ENCODE measurements at regions of chr16 and their contacts with region 1.

Region 1: GRCh38 chr16:84277237-84277823 is 17.3 kb upstream of the WFDC1 start:
- DNase-seq: peak in 1 of 2 experiments; percentile 90
- H3K4me3 ChIP-seq: no peak overlapping the region
- H3K27ac ChIP-seq: no peak overlapping the region
- H3K4me1 ChIP-seq: peaks cover 3 to 7% (median 5%) of the 10 kb centered on the region in 4 experiments
- H3K27me3 ChIP-seq: no peaks in the 10 kb centered on the region; a peak in 2 of 7 replicates
- CTCF ChIP-seq: peak; percentile 80 to 89 (median 82)
- EP300 ChIP-seq: no peak
- POLR2A ChIP-seq: no peak
- RAD21 ChIP-seq: peak; percentile 90 to 95

Region 2: GRCh38 chr16:84247844-84248243 is 29.5 kb before region 1 on chr16:
- CTCF ChIA-PET with region 1: interaction called, 14 read pairs
- POLR2A ChIA-PET with region 1: no interaction called
- DNase-seq: no peak
- H3K4me3 ChIP-seq: no peak overlapping the region
- H3K27ac ChIP-seq: no peak overlapping the region
- H3K4me1 ChIP-seq: no peaks in the 10 kb centered on the region
- H3K27me3 ChIP-seq: no peaks in the 10 kb centered on the region
- CTCF ChIP-seq: no peak
- EP300 ChIP-seq: no peak
- POLR2A ChIP-seq: no peak
- RAD21 ChIP-seq: no peak

Region 3: DNA sequence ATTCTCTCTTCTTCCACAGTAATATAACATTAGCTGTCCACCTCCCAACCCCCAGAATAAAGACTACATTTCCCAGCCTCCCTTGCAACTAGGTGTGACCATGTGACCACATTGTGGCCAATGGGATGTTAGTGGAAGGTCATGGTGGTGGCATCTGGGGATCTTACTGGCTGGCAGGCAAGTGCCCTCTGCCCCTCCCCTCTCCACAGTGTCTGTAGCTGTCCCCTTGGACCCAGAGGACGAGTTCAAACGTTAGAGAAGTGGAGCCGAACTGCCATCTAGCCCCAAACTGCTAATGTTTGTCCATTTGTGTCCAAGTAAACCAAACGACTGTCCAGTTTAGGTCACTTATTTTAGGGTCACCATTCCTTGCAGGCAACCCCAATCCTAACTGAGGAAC is 10.9 kb before region 1 on chr16:
- CTCF ChIA-PET with region 1: interaction called, 26 read pairs
- POLR2A ChIA-PET with region 1: no interaction called
- DNase-seq: peak in 1 of 2 experiments; percentile 68
- H3K4me3 ChIP-seq: no peak overlapping the region
- H3K27ac ChIP-seq: no peak overlapping the region
- H3K4me1 ChIP-seq: peaks cover 0 to 2% (median 0%) of the 10 kb centered on the region in 4 experiments; a peak in 2 of 7 replicates
- H3K27me3 ChIP-seq: peaks cover 0 to 3% (median 0%) of the 10 kb centered on the region in 4 experiments; a peak in 1 of 7 replicates
- CTCF ChIP-seq: no peak
- EP300 ChIP-seq: no peak
- POLR2A ChIP-seq: no peak
- RAD21 ChIP-seq: no peak

Region 4: DNA sequence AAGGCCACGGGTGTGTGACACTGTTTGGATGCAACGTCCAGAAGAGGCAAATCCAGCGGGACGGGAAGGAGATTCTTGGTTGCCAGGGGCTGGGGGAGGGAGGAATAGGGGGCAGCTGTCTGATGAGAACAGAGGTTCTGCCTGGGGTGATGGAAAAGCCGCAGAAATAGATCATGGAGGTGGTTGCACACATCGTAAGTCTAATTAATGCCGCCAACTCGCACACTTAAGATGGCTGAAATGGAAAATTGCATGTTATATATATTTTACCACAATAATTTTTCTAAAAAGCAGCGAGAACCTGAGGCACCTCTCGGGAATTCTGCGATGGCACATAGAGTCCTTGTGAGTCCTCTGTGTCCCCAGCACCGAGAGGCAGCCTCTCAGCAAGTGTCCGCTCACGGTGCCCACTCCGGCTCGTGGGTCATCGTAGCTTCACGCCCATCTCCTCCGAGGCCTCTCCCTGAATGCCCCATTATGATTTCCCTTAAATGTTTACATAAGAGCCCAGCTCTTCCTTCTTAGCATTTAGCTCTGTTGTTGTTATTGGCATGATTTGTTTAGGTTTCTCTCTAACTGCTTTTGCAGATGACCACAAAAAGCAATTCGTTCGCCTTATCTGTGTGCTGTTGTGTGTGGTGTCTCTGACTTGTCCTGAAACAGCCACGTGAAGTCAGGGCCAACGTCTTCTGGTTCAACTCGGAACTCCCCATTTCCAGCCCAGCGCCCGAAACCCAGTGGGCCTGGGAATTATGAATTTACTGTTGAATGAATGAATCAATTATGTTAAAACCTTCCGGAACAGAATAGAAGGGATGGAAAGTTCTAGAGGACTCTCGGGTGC is 25.0 kb after region 1 on chr16:
- CTCF ChIA-PET with region 1: interaction called, 212 read pairs
- POLR2A ChIA-PET with region 1: no interaction called
- DNase-seq: no peak
- H3K4me3 ChIP-seq: no peak overlapping the region
- H3K27ac ChIP-seq: no peak overlapping the region
- H3K4me1 ChIP-seq: peaks cover 9 to 16% (median 13%) of the 10 kb centered on the region in 4 experiments
- H3K27me3 ChIP-seq: peaks cover 0 to 2% (median 0%) of the 10 kb centered on the region in 4 experiments; a peak in 1 of 7 replicates
- CTCF ChIP-seq: no peak
- EP300 ChIP-seq: no peak
- POLR2A ChIP-seq: no peak
- RAD21 ChIP-seq: no peak

Region 5: GRCh38 chr16:84443166-84443802 is 166.0 kb after region 1 on chr16:
- CTCF ChIA-PET with region 1: interaction called, 20 read pairs
- POLR2A ChIA-PET with region 1: no interaction called
- DNase-seq: no peak
- H3K4me3 ChIP-seq: no peak overlapping the region
- H3K27ac ChIP-seq: no peak overlapping the region
- H3K4me1 ChIP-seq: no peaks in the 10 kb centered on the region
- H3K27me3 ChIP-seq: no peaks in the 10 kb centered on the region
- CTCF ChIP-seq: no peak
- EP300 ChIP-seq: no peak
- POLR2A ChIP-seq: no peak
- RAD21 ChIP-seq: no peak

Measured in H1 (cell line).